Dorsolateral prefrontal cortex (tissue), 120 donors: ENCODE measurements at regions of chr7 and their contacts with region 1.

Region 1: GRCh38 chr7:90455163-90456030 is 14.0 kb upstream of the PTTG1IP2 start:
- DNase-seq: peak in 1 of 10 donors; percentile 18
- H3K4me3 ChIP-seq: peak overlapping the region in 57 of 59 donors; percentile 1 to 63 (median 39)
- H3K27ac ChIP-seq: peak overlapping the region in 6 of 59 donors; percentile 17 to 69 (median 22)
- H3K27me3 ChIP-seq: no peaks in the 10 kb centered on the region
- CTCF ChIP-seq: peak; percentile 56 to 86 (median 72)

Region 2: DNA sequence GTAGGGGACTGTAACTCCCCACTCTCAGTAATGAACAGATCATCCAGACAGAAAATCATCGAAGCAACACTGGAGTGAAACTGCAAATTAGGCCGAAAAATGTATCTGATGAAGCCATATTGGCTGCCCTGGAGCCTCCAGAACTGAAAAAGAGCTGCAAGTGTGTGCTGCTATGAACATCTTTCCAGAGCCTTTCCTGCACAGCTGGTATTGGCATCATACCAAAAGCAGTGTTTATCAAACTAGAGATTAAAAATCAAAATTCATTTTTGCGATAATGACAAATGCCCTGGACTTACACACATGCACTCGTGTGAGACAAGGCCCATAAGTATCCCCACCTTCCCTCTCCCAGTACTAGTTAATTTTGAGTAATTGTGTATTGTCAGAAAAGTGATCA is 59.0 kb before region 1 on chr7:
- intact Hi-C with region 1: no loop called
- DNase-seq: no peak
- H3K4me3 ChIP-seq: no peak overlapping the region
- H3K27ac ChIP-seq: no peak overlapping the region
- H3K27me3 ChIP-seq: no peaks in the 10 kb centered on the region
- CTCF ChIP-seq: no peak

Region 3: DNA sequence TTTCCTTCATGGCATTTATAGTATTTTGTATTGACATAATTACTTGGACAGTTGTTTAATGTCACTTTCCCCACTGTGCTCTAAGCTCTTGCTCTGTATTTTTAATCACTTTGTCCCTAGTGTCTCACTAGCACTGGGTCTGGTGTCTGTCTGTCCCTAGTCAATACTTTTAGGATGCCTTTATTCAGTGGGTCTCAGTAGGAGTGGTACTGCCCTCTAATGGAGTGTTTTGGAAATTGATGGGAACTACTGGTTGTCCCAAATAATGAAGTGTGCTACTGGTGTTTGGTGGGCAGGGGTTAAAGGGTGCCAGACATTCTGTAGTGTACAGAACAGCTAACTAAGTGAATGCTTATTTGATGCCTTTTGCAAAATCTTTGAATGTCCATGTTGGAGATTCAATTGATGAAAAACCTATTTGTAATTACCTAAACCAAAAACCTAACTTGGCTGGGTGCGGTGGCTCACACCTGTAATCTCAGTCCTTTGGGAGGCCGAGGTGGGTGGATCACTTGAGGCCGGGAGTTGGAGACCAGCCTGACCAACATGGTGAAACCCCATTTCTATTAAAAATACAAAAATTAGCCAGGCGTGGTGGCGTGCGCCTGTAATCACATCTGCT is 174.0 kb after region 1 on chr7:
- intact Hi-C with region 1: loop called in 1 of 2 experiments (anchors 10 kb)
- DNase-seq: no peak
- H3K4me3 ChIP-seq: no peak overlapping the region
- H3K27ac ChIP-seq: no peak overlapping the region
- H3K27me3 ChIP-seq: no peaks in the 10 kb centered on the region
- CTCF ChIP-seq: peak in 55 of 56 donors; percentile 22 to 69 (median 55)

Region 4: DNA sequence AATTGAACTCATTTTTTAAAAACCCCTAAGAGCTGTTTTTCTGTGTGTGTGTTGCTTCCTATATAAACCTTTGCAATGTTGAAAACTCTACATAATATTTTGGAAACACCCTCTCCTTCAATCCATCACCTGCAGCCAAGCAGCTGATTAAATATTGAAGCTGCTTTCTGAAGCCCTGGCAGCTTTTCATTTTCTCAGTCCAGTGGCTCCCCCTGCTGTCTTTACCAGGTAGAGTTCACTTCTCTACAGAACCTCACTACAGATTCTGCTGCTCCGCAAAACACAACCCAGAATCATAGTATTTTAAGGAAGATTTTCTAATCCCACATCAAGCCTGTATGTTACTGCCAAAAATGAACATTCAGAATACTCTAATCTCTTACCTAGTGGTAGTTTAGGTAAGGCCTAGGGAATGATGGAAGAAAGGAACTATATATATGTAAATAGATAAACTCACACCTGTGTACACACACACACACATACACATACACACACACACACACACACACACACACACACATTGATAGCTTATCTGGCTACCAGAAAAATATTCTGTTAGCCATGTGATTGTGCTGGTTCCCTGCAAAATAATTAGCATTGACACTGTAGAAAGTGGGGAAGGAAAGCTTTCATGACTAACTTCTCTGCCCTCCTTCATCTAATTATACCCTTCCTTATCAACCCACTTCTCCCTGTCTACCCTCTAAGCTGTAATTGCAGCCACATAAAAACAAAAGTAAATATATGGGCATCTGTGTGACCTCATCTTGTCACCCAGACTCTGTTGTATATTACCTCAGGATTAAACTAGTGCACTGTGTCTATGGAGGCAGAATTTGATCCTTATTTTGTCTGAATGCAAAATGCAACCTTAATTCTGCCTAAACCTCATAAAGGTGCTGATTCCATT is 579.3 kb after region 1 on chr7:
- intact Hi-C with region 1: loop called in 1 of 2 experiments (anchors 10 kb)
- DNase-seq: peak in 8 of 10 donors; percentile 46 to 80 (median 52)
- H3K4me3 ChIP-seq: no peak overlapping the region
- H3K27ac ChIP-seq: peak overlapping the region in 10 of 59 donors; percentile 7 to 53 (median 40)
- H3K27me3 ChIP-seq: no peaks in the 10 kb centered on the region
- CTCF ChIP-seq: peak; percentile 30 to 82 (median 71)

Region 5: DNA sequence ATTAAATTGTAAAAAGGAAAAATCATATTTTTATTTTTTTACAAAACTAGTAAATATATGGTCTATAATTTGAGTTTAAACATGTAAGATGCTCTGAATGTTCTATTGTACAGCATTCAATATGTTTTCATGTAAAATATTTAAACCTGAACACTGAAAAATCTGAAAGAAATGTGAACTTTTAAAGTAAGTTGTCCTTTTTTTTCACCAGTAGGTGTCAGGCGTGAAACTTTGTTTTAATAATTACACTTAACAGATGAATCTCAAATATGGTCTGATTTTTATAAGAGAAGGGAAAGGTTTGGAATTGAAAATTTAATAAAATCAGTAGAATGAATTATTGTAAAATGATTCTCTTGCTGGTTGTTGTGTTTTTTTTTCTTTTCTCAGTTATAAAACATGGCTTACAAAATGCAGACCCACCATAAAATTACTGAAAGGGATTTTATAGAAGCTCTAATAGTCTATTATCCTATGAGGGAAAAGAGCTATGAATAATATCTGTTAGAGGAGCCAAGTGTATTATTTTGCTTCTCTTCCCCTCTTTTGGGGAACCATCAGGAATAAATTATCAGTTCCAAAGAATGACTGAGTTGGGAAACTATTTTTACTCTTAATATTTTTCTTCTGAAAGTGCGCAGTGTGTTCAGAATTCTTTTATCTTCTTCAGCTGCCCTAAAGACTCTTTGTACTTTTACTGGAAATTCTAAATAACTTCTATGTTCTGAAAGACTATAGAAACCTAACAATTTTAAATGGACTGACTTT is 591.1 kb after region 1 on chr7:
- intact Hi-C with region 1: loop called in 1 of 2 experiments (anchors 10 kb)
- DNase-seq: no peak
- H3K4me3 ChIP-seq: no peak overlapping the region
- H3K27ac ChIP-seq: no peak overlapping the region
- H3K27me3 ChIP-seq: no peaks in the 10 kb centered on the region
- CTCF ChIP-seq: peak in 44 of 56 donors; percentile 10 to 52 (median 30)